ENCODE measurements at regions of chr19 and their contacts with region 1.

Region 1: DNA sequence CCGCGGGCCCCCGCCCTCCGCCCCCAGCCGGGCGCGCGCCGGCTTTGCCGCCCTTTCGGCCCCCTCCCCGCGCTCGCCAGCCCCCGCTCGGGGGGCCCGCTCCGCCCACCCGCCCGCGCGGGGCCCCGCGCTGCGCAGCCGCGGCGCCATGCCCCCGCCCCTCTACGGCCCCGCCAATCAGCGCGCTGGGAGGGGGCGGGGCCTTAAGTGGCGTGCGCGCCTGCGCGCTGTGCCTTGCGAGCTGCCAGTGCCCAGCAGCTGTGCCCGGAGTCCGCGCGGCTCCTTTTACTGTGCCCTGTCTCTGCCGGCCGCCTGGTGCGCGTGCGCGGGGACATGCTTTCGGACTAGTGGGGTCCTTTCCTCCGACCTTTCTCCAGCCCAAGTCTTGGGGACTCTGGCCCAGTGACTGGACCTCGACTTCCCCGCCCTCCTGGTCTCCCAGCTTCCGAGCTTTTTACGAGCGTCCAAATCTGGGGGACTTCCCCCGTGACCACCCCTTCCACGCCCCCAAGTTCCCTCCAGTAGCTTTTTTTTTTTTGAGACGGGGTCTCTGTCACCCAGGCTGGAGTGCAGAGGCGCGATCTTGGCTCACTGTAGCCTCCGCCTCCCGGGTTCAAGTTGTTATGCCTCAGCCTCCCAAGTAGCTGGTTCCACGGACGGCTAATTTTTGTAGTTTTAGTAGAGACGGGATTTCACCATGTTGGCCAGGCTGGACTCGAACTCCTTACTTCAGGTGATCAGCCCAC is at the start of gene MBD3:
- DNase-seq: peak; percentile 91
- ATAC-seq: peak; percentile 83
- H3K4me3 Mint-ChIP-seq: peak within 1 kb of the TSS; percentile 88
- H3K27ac Mint-ChIP-seq: peak within 1 kb of the TSS; percentile 89
- H3K4me1 Mint-ChIP-seq: peaks cover 19% of the 10 kb centered on the region
- H3K27me3 Mint-ChIP-seq: no peaks in the 10 kb centered on the region
- total RNA-seq, gene MBD3: 87.4 to 101 TPM

Region 2: DNA sequence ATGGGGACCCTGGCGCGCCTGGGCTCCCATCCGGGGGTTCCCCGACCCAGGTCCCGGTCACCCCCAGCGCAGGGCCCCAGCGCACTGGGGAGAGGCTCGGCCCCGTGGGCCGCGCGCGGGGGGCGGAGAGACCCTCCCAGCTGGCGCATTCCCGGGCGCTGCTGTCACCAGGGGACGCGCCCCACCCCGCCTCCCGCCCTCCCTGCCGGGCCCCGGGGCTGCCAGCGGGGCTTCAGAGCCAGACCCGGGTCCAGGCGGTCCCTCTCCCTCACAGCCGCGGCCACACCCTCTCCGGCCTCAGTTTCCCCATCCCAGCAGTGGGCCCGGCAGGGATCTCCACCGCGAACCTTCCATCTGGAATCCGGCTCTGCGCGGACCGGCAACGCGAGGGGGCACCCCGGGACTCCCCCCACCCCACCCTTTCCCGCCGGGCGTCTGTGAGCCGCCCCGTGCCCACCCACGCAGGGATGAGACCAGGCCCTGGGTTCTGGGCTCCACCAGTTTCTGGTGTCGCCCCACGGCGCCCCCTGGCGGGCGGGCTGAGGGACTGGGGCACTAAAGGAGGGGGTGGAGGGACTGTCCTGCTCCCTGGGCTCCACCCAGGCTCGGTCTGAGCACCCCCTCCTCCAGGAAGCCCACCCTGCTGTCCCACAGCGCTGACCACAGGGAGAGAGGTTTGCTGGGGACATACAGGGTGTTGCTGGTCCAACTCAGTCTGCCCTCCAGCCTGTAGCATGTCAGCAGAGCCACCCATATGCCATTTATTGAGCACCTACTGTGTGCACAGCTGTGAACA is 79.2 kb before region 1 on chr19:
- CTCF ChIA-PET with region 1: no interaction called
- DNase-seq: peak; percentile 76
- ATAC-seq: peak; percentile 59
- H3K4me3 Mint-ChIP-seq: no peak overlapping the region
- H3K27ac Mint-ChIP-seq: no peak overlapping the region
- H3K4me1 Mint-ChIP-seq: peaks cover 2% of the 10 kb centered on the region
- H3K27me3 Mint-ChIP-seq: peaks cover 19% of the 10 kb centered on the region

Region 3: DNA sequence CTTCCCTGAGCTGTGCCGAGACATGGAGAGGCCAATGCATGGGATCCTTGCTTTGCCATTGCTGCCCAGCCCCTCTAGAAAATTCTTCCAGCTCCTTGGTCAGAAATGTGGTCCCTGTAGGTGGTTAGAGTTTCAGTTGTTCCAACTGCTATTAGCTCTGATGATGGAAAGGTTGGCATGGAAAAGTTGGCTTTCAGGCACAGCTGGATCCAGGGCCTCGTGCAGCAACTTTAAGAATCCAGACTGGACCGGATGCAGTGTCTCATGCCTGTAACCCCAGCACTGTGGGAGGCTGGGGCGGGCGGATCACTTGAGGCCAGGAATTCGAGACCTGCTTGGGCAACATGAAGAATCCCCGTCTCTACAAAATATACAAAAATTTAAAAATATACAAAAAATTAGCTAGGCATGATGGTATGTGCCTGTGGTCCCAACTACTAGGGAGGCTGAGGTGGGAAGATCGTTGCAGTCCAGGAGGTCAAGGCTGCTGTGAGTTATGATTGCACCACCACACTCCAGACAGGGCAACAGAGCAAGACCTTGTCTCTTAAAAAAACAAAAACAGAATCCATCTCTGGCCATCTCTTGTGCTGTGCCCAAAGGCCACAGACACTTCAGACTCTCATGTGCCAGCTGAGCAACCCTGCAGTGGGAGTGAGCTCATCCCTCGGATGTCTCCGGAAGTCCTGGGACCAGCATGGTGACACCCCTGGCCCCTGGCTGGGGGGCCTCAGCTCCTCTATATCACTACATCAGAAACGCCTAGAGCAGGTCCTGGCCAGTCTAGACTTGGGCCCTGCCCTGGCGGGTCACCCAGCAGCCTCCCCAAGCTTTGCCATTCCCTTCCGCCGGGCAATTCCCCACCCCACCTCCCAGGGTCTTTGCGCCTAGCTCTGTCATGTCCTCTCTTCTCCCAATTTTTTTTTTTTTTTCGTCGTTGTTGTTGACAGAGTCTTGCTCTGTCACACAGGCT is 41.6 kb before region 1 on chr19:
- CTCF ChIA-PET with region 1: interaction called, 16 read pairs
- DNase-seq: no peak
- ATAC-seq: no peak
- H3K4me3 Mint-ChIP-seq: no peak overlapping the region
- H3K27ac Mint-ChIP-seq: no peak overlapping the region
- H3K4me1 Mint-ChIP-seq: peaks cover under 1% of the 10 kb centered on the region
- H3K27me3 Mint-ChIP-seq: peaks cover 4% of the 10 kb centered on the region

Region 4: DNA sequence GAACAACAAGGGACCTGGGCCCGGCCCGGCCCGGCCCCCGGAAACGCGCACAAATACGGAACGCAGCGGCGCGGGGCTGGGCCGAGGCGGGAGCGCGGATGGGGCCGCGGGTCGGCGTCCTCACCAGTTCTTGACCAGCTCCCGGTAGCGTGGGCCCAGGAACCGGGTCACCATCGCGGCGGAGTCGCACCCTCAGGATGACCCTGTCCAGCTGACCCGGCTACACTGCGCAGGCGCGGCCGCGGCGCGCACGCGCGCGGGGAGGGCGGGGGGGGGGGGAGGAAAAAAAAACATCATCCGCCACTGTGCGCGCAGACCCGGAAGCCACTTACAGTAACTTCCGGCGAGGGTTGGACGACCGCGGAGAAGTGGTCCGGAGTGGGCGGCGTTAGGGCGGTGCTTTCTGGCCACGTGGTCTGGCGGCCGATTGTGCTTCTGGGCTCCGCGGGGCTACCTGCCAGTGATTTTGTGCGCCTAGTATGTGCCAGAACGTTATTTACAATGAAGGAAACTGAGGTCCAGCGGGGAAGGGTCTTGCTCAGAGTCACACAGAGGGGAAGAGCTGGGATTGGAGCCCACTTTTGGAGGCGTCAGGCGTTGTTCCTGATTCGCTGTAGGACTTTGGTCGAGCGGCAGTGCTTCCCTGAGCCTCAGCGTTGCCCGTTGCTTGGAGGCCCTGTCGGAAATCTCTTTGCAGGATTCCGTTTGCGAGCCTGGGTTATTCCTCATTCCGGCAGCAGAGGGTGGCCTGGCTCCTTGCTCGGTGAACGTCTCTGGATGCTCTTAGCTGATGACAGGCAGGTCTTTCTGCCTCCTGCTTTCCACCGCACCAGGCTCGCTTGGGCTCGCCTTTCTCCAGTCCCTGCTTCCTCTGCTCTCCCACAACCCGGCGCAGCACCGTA is 12.6 kb after region 1 on chr19 and contains the start of gene UQCR11:
- CTCF ChIA-PET with region 1: interaction called, 20 read pairs
- DNase-seq: peak; percentile 96
- ATAC-seq: peak; percentile 90
- H3K4me3 Mint-ChIP-seq: peak within 1 kb of the TSS; percentile 92
- H3K27ac Mint-ChIP-seq: peak within 1 kb of the TSS; percentile 98
- H3K4me1 Mint-ChIP-seq: peaks cover 54% of the 10 kb centered on the region
- H3K27me3 Mint-ChIP-seq: no peaks in the 10 kb centered on the region
- total RNA-seq, gene UQCR11: 192 to 196 TPM

Region 5: GRCh38 chr19:1665565-1666047 is 72.7 kb after region 1 on chr19:
- CTCF ChIA-PET with region 1: no interaction called
- DNase-seq: no peak
- ATAC-seq: no peak
- H3K4me3 Mint-ChIP-seq: no peak overlapping the region
- H3K27ac Mint-ChIP-seq: no peak overlapping the region
- H3K4me1 Mint-ChIP-seq: peaks cover 12% of the 10 kb centered on the region
- H3K27me3 Mint-ChIP-seq: peaks cover 24% of the 10 kb centered on the region

Measured in activated CD8-positive, alpha-beta memory T cell treated with anti-CD3 and anti-CD28 coated beads, Interleukin-2, amount 10 ng/mL, durations not matched to agents 7 days and 5 days (primary cell).